ENCODE measurements at regions of chr2 and their contacts with region 1.

Region 1: GRCh38 chr2:128321784-128322714 is 3.4 kb upstream of the HS6ST1 start:
- DNase-seq: peak; percentile 86
- ATAC-seq: peak; percentile 66

Region 2: DNA sequence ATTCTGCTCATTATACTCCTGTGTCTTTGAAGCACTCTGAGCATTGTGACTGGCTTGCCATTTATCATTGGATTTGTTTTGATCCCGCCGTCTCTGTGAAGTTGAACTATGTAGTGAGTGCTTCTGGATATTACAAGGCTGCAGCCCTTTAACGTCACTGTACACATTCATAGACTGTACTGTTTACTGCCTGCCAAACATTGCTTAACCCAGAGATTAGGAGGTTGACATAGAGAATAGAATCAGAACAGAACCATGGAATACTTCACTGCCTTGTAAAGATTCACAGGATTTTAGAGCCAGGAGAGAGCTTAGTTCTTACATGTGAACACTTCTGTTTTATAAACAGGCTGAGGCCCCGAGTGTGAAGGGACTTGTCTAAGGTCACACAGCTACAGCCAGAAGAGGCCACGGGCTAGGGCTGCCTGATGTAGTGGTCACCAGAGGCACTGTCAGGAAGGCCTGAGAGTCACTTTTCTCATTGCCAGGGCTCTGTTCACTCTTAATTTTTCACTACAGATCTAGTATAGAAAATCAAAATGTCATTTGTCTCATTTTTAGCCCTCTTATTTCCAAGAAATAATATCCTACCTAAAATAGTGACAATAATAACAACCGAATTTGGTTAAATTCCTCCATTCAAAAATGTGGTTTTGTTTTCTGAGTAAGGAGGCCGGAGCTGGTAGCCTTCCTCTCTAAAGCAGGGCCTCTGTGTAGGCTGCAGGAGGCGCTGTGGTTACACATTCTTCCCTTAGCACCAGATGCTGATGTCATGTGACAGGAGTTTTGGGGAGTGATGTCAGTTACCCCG is 143.2 kb before region 1 on chr2:
- intact Hi-C with region 1: loop called in 1 of 2 experiments (anchors 10 kb)
- DNase-seq: peak; percentile 62
- ATAC-seq: peak; percentile 82 to 85

Region 3: GRCh38 chr2:128531856-128532255 is 209.8 kb after region 1 on chr2:
- intact Hi-C with region 1: loop called (anchors 5 to 10 kb)
- DNase-seq: no peak
- ATAC-seq: no peak

Region 4: DNA sequence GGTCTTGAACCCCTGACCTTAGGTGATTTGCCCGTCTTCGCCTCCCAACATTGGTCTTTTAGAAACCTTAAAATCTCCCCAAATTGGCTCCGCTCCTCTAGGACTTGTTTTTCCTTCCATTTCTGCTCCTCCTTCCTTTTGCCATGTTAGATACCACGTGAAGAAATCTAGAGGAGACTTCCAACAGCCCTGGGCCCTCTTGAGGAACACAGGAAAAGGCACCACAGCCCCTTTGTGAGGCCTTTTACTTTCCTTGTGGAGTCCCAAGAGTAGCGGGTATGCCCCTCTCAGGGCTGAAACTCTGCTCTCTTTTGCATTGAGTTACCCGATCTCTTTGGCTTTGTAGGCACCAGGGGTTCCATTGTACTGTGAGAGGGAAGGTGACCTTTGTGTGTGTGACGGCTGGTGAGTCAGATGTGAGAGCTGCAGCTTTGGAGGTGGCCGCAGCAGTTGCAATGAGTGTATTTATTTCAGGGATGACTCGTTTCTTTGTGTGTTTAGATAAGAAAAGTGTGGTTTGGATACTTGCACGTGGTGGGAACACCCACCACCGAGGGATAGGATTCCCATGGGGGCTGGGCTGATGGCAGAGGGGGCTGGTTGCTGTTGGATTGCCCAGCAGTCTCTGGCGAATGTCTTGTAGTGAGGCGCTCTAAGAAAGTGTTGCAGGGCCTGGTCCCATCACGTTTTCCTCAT is 215.0 kb after region 1 on chr2:
- intact Hi-C with region 1: loop called (anchors 5 to 10 kb)
- DNase-seq: no peak
- ATAC-seq: peak in 1 of 2 donors; percentile 47

Region 5: GRCh38 chr2:128573116-128573515 is 251.1 kb after region 1 on chr2:
- intact Hi-C with region 1: no loop called
- DNase-seq: no peak
- ATAC-seq: peak in 1 of 2 donors; percentile 67

Measured in left cardiac atrium (tissue), 4 donors.